Transverse colon (tissue), 4 donors: ENCODE measurements at regions of chr2 and their contacts with region 1.

Region 1: DNA sequence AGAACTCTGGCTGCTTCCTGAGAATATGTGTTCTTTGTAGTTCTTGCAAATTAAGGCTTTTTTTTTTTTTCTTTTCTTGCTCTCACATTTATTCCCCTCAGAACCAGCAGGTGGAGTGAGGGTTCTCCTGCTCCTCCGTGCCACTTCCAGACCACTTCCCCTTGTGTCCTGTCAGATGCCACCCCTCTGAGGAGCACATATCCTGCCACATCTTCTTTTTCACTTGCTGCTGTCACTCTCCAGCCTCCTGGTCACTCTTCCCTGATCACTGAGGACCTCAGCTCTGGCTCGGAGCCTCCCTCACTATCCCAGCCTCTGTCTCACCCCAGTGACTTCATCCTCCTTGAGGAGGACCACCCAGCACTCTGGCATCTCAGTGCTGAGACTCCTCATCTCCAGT is 100.5 kb downstream of the TACR1 start:
- DNase-seq: no peak
- H3K4me3 ChIP-seq: no peak overlapping the region
- H3K27ac ChIP-seq: no peak overlapping the region
- H3K4me1 ChIP-seq: no peaks in the 10 kb centered on the region
- H3K27me3 ChIP-seq: no peaks in the 10 kb centered on the region
- CTCF ChIP-seq: peak in 4 of 5 experiments; percentile 20 to 30 (median 26)
- EP300 ChIP-seq: no peak
- POLR2A ChIP-seq: no peak

Region 2: GRCh38 chr2:75053484-75054112 is 45.3 kb before region 1 on chr2:
- in situ Hi-C with region 1: no loop called
- intact Hi-C with region 1: loop called (anchors 2 kb)
- DNase-seq: peak; percentile 9
- H3K4me3 ChIP-seq: no peak overlapping the region
- H3K27ac ChIP-seq: no peak overlapping the region
- H3K4me1 ChIP-seq: no peaks in the 10 kb centered on the region
- H3K27me3 ChIP-seq: no peaks in the 10 kb centered on the region
- CTCF ChIP-seq: peak; percentile 36 to 60 (median 45)
- EP300 ChIP-seq: no peak
- POLR2A ChIP-seq: no peak